Psoas muscle (tissue), 8 donors: ENCODE measurements at regions of chr20 and their contacts with region 1.

Region 1: GRCh38 chr20:8131598-8132483 is at the start of gene PLCB1:
- DNase-seq: peak; percentile 87 to 94
- ATAC-seq: peak; percentile 96 to 97 (median 96)
- H3K4me3 ChIP-seq: peak within 1 kb of the TSS; percentile 90
- H3K27ac ChIP-seq: peak within 1 kb of the TSS; percentile 74
- H3K4me1 ChIP-seq: peaks cover 7% of the 10 kb centered on the region
- H3K27me3 ChIP-seq: no peaks in the 10 kb centered on the region
- CTCF ChIP-seq: peak; percentile 83
- total RNA-seq, gene PLCB1: 4.2 to 10.7 (median 6.9) TPM

Region 2: DNA sequence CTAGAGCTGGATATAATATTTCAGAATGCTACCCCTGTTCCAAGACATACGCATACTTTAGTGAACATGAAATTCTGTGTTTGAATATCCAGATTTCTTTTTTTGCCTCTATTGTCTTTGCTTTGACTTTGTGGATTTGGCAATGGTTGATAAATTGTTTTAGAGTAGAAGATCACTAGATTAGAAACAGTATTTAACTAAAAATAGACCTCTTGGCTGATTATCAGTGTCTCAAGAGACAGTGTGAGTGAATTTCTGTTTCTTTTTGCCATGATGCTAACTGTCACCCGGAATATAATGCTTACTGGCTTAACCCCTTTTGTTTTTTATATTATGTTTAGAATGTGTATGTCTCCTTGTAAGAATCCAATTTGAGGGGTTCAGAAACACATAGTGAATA is 102.7 kb after region 1 on chr20:
- intact Hi-C with region 1: loop called in 1 of 2 experiments (anchors 5 kb)
- DNase-seq: no peak
- ATAC-seq: peak in 1 of 4 donors; percentile 34
- H3K4me3 ChIP-seq: peak overlapping the region; percentile 5
- H3K27ac ChIP-seq: no peak overlapping the region
- H3K4me1 ChIP-seq: peaks cover 27% of the 10 kb centered on the region
- H3K27me3 ChIP-seq: no peaks in the 10 kb centered on the region
- CTCF ChIP-seq: no peak

Region 3: GRCh38 chr20:8299921-8300320 is 168.1 kb after region 1 on chr20:
- intact Hi-C with region 1: loop called (anchors 5 kb)
- DNase-seq: no peak
- ATAC-seq: no peak
- H3K4me3 ChIP-seq: no peak overlapping the region
- H3K27ac ChIP-seq: no peak overlapping the region
- H3K4me1 ChIP-seq: peaks cover 14% of the 10 kb centered on the region
- H3K27me3 ChIP-seq: no peaks in the 10 kb centered on the region
- CTCF ChIP-seq: no peak

Region 4: GRCh38 chr20:8389381-8390036 is 257.7 kb after region 1 on chr20:
- intact Hi-C with region 1: loop called (anchors 1 to 5 kb)
- DNase-seq: no peak
- ATAC-seq: peak in 3 of 4 donors; percentile 42 to 79 (median 66)
- H3K4me3 ChIP-seq: peak overlapping the region; percentile 37
- H3K27ac ChIP-seq: no peak overlapping the region
- H3K4me1 ChIP-seq: peaks cover 27% of the 10 kb centered on the region
- H3K27me3 ChIP-seq: no peaks in the 10 kb centered on the region
- CTCF ChIP-seq: peak; percentile 62

Region 5: DNA sequence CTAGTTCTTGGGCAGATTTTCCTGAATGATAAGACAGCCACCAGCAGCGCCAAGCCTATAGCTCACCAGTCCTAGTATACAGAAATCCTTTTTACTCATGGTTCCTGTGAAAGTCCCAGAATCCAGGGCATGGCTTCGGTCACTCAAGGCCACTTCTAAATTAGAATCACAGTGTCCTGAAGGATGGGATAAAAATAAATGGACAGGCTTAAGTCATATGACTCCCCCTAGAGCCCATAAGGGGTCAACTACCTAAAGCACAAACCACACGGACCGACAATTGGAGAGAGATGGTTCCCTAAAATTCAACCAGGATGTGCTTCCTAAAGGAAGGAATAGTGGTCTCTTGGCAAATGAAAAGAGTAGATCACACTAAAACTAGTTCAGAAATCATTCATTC is 532.9 kb after region 1 on chr20:
- intact Hi-C with region 1: loop called in 1 of 2 experiments (anchors 10 kb)
- DNase-seq: no peak
- ATAC-seq: peak in 3 of 4 donors; percentile 61 to 91 (median 90)
- H3K4me3 ChIP-seq: no peak overlapping the region
- H3K27ac ChIP-seq: no peak overlapping the region
- H3K4me1 ChIP-seq: peaks cover 13% of the 10 kb centered on the region
- H3K27me3 ChIP-seq: no peaks in the 10 kb centered on the region
- CTCF ChIP-seq: peak; percentile 20

Region 6: GRCh38 chr20:8709627-8710026 is 577.8 kb after region 1 on chr20:
- intact Hi-C with region 1: no loop called
- DNase-seq: no peak
- ATAC-seq: no peak
- H3K4me3 ChIP-seq: no peak overlapping the region
- H3K27ac ChIP-seq: no peak overlapping the region
- H3K4me1 ChIP-seq: no peaks in the 10 kb centered on the region
- H3K27me3 ChIP-seq: no peaks in the 10 kb centered on the region
- CTCF ChIP-seq: no peak